Posterior cingulate gyrus (tissue), 11 donors: ENCODE measurements at regions of chr10 and their contacts with region 1.

Region 1: GRCh38 chr10:63206997-63207811 is 74.1 kb downstream of the NRBF2 start:
- DNase-seq: peak in 1 of 10 donors; percentile 18

Region 2: GRCh38 chr10:63268798-63269503 is 61.7 kb after region 1 on chr10:
- intact Hi-C with region 1: loop called (anchors 5 kb)
- DNase-seq: peak in 9 of 10 donors; percentile 16 to 92 (median 59)